Motor neuron (in vitro differentiated cells): ENCODE measurements at regions of chr10 and their contacts with region 1.

Region 1: DNA sequence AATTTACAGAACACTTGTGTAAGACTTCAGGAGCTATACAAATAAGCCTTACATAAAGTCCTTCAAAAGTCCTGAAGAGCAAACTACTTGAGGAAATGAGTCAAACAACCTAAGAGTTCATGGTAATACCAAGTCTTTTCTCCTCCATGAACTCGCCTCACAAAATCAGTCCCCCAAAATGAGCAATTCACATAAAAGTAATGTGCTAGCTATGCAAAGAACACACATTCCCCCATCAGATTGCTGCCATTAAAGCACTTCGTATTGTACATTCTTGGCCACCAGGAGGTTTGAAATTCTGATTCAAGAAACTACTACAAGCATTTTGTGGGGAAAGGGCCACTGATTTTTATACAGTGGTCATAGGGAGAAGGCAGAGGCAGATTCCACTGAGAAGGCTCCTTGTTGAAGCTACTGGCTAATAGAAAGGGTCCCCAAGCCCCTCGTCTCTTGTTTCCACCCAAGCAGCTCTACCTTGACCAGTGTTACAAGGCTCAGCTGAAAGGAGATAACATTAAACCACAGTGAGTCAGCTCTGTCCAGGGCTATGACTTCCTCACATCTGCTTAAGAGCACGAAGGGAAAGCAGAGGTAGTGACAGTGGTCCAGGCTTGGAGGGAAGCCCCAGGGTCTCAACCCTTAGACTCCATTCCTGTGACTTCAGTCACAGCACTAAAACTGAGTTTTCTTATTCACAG is 115.2 kb upstream of the CDK1 start:
- ATAC-seq: peak in 2 of 8 experiments; percentile 46 to 54
- H3K4me3 ChIP-seq: no peak overlapping the region
- H3K27ac ChIP-seq: no peak overlapping the region
- H3K4me1 ChIP-seq: peaks cover 0 to 8% of the 10 kb centered on the region in 2 donors

Region 2: DNA sequence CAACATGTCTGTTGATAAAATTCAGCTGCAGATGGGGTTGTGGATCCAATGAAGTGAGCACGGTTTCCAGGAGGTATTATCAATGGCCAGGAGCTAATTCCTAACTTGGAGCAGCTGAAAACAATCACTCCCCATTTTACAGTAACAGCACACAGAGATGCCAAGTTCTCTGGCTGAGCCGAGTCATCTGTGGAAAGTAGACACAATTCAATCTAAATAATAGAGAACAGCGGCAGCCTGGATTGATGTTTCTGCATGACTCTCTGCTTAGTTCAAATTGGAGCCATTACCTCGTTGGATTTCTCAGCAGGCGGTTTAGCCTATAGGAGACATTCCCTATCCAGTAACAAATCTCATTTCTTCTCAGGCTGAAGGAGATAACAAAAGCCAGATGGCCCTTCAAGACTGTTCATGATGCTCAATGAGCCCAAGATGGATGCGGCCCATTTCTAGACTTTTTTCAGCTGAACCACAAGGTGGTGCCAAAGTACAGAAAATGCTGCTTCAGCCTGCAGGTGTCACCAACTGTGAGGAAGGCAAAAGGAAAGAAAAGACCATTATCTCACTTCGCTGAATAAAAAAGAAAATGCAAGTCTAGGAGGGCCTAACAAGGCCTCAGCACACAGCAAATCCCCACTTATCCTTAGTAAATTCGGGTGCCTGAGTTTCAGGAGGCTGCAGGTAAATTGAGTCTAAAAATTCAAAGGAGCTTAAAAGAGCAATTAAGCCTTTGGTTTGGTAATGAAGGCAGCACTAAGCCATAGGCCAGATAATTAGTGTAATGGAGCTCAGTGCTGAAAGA is 1037.1 kb before region 1 on chr10:
- in situ Hi-C with region 1: loop called in 1 of 9 experiments (anchors 25 kb)
- ATAC-seq: peak; percentile 75 to 96 (median 94)
- H3K4me3 ChIP-seq: no peak overlapping the region
- H3K27ac ChIP-seq: no peak overlapping the region
- H3K4me1 ChIP-seq: peaks cover 3 to 5% of the 10 kb centered on the region in 2 donors

Region 3: DNA sequence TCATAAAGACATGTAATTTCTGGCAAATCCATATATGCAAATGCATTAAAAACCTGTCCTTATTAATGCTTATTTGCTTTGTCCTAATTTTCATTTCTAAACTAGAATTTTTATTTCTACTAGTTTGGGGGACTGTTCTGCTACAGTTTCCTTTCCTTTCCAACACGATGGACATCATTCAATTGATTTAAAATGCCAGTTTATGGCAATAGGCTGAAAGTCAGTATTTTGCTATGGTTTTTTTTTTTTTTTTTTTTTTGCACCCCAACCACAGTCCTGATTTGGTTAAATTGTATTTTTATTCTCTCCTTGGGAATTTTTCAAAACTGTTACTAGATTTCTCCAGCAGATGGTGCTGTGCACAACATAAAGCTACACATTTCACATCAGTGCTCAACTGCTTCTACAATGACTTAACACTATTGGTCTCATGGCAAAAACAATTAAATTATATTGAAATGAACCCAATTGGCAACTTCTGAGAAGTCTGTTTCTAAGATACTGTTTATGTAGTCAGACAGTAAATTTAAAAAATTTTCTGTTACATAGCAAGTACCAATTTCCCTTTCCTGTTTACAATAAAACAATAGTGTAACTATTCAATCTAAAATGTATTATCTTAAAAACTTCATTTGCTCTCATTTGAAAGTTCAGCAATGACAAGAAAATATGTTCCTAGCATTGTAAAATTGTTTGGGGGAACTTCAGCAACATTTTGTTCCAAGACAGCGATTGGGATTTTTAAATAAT is 562.9 kb before region 1 on chr10:
- in situ Hi-C with region 1: loop called in 1 of 9 experiments (anchors 25 kb)
- ATAC-seq: peak in 4 of 8 experiments; percentile 48 to 81 (median 78)
- H3K4me3 ChIP-seq: no peak overlapping the region
- H3K27ac ChIP-seq: no peak overlapping the region
- H3K4me1 ChIP-seq: peaks cover 0 to 6% of the 10 kb centered on the region in 2 donors

Region 4: DNA sequence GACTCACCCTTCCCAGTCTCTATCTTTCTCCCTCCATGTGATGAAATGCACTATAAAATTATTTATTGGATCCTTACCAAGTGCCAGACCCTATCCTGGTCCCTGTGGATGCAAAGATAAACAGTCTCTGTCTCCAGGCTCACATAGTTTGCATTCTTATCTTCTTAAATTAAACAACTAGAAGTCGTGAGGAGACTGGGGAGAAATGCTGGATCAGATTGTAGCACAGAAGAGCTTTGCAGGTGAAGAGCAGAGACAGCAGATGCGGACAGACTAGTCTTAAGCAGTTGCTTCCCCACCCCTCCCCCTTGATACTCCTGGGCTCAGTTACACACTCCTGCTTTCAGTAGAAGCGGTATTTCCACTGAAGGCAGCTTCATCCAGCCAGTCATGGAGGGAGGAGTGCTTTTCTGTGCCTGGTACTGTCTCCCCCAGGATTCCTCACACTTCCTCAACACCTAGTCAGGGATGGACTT is 94.4 kb after region 1 on chr10:
- in situ Hi-C with region 1: loop called in 1 of 9 experiments (anchors 25 kb)
- ATAC-seq: peak in 3 of 8 experiments; percentile 33 to 51 (median 41)
- H3K4me3 ChIP-seq: no peak overlapping the region
- H3K27ac ChIP-seq: no peak overlapping the region
- H3K4me1 ChIP-seq: no peaks in the 10 kb centered on the region

Region 5: GRCh38 chr10:61016630-61017029 is 353.6 kb after region 1 on chr10:
- in situ Hi-C with region 1: no loop called
- ATAC-seq: no peak
- H3K4me3 ChIP-seq: no peak overlapping the region
- H3K27ac ChIP-seq: no peak overlapping the region
- H3K4me1 ChIP-seq: no peaks in the 10 kb centered on the region